Adrenal gland (tissue), 19 donors: ENCODE measurements at regions of chr6 and their contacts with region 1.

Region 1: DNA sequence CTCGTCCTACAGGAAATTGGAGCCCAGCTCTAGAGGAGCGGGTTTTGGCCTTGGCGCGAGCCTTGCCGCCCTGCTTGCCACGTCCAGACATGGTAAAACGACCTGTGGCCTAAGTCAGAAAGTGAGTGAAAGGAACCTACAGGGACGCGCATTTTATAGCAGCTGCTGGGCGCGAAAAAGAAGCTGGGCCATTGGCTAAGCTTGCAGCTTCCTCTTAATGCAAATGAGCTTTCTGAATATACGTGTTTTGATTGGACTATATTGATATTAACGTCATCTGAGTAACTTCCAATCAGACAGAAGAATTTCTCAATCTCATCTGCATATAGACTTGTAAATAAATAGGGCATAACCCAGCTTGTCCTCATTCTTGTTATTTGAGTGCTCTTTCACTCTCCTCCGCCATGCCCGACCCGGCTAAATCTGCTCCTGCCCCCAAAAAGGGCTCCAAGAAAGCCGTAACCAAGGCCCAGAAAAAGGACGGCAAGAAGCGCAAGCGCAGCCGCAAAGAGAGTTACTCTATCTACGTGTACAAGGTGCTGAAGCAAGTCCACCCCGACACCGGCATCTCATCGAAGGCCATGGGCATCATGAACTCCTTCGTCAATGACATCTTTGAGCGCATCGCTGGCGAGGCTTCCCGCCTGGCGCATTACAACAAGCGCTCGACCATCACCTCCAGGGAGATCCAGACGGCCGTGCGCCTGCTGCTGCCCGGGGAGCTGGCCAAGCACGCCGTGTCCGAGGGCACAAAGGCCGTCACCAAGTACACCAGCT is 18.9 kb downstream of the OR2B2 start:
- DNase-seq: peak; percentile 80 to 94 (median 90)
- H3K4me3 ChIP-seq: peak overlapping the region in 2 of 4 donors; percentile 60 to 75
- H3K27ac ChIP-seq: peak overlapping the region; percentile 59 to 94 (median 87)
- H3K4me1 ChIP-seq: peaks cover 7 to 9% of the 10 kb centered on the region in 2 donors
- H3K27me3 ChIP-seq: no peaks in the 10 kb centered on the region
- CTCF ChIP-seq: no peak
- POLR2A ChIP-seq: peak; percentile 89 to 91

Region 2: GRCh38 chr6:27188885-27189418 is 704.3 kb before region 1 on chr6:
- intact Hi-C with region 1: loop called (anchors 10 kb)
- DNase-seq: peak; percentile 46 to 78 (median 66)
- H3K4me3 ChIP-seq: peak overlapping the region; percentile 22 to 87 (median 57)
- H3K27ac ChIP-seq: peak overlapping the region; percentile 74 to 88 (median 77)
- H3K4me1 ChIP-seq: no peaks in the 10 kb centered on the region
- H3K27me3 ChIP-seq: no peaks in the 10 kb centered on the region
- CTCF ChIP-seq: peak; percentile 58 to 85 (median 76)
- POLR2A ChIP-seq: no peak

Region 3: DNA sequence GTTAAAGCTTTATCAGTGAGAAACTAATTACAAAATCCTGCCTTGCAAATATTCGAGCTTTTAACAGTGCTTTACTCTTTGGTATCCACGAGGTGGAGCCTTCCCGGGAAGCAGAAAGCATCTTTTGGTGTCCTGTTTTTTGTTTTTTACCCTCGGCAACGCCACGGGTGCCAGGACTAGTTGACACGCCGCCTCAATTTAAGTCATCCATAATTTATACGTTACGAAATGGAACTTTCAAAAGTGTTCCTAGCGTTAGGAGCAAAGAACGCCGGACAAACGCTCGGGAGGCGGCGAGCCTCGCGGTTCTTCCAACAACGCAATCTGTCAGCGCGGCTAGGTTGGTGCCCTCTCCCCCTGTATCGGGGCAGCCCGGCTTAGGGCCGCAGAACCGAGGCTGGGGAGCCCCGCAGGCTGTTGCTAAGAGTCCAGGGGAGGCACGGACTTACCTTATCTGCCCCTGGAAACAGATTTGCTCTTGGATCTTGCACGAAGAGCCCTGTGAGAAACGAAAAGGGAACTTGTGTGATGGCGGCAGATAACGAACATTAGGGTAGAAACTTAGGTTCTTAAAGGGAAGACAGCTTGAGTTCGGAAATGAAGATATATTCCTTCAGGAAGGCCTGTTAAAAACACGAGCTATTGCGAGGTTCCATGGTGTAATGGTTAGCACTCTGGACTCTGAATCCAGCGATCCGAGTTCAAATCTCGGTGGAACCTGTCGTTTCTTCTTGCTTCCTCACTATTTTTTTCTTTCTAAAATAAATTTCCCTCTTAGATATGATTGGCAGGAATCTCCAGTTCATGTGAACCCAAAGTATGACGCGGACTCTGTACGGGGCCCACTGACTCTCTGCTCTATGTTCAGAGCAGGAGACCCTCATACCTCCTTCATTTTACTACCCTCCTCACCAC is 374.1 kb before region 1 on chr6:
- intact Hi-C with region 1: loop called in 1 of 2 experiments (anchors 10 kb)
- DNase-seq: peak; percentile 58 to 86 (median 66)
- H3K4me3 ChIP-seq: peak overlapping the region in 3 of 4 donors; percentile 0 to 66 (median 66)
- H3K27ac ChIP-seq: peak overlapping the region in 4 of 5 donors; percentile 61 to 88 (median 88)
- H3K4me1 ChIP-seq: peaks cover 0 to 8% of the 10 kb centered on the region in 2 donors
- H3K27me3 ChIP-seq: no peaks in the 10 kb centered on the region
- CTCF ChIP-seq: peak; percentile 46 to 78 (median 64)
- POLR2A ChIP-seq: peak in 1 of 2 donors; percentile 12

Region 4: GRCh38 chr6:27838058-27838944 is 54.9 kb before region 1 on chr6:
- intact Hi-C with region 1: no loop called
- DNase-seq: peak; percentile 76 to 93 (median 82)
- H3K4me3 ChIP-seq: peak overlapping the region; percentile 5 to 73 (median 33)
- H3K27ac ChIP-seq: peak overlapping the region; percentile 94 to 100 (median 98)
- H3K4me1 ChIP-seq: peaks cover 0 to 26% of the 10 kb centered on the region in 2 donors
- H3K27me3 ChIP-seq: no peaks in the 10 kb centered on the region
- CTCF ChIP-seq: peak in 4 of 6 experiments; percentile 14 to 54 (median 51)
- POLR2A ChIP-seq: peak; percentile 79 to 94